ENCODE measurements at regions of chr22 and their contacts with region 1.

Region 1: GRCh38 chr22:50341977-50342650 is 1.0 kb upstream of the PPP6R2 start:
- DNase-seq: peak; percentile 83
- H3K4me3 Mint-ChIP-seq: peak overlapping the region; percentile 75
- H3K27ac Mint-ChIP-seq: peak overlapping the region; percentile 73
- H3K4me1 Mint-ChIP-seq: peaks cover 2% of the 10 kb centered on the region
- H3K27me3 Mint-ChIP-seq: no peaks in the 10 kb centered on the region

Region 2: GRCh38 chr22:50244420-50245213 is 97.5 kb before region 1 on chr22 and contains the start of gene TUBGCP6:
- intact Hi-C with region 1: loop called (anchors 1 kb)
- DNase-seq: peak; percentile 92
- H3K4me3 Mint-ChIP-seq: peak within 1 kb of the TSS; percentile 100
- H3K27ac Mint-ChIP-seq: peak within 1 kb of the TSS; percentile 100
- H3K4me1 Mint-ChIP-seq: peaks cover 12% of the 10 kb centered on the region
- H3K27me3 Mint-ChIP-seq: no peaks in the 10 kb centered on the region
- total RNA-seq, gene TUBGCP6: 48.8 and 49.6 TPM in 2 replicates

Region 3: DNA sequence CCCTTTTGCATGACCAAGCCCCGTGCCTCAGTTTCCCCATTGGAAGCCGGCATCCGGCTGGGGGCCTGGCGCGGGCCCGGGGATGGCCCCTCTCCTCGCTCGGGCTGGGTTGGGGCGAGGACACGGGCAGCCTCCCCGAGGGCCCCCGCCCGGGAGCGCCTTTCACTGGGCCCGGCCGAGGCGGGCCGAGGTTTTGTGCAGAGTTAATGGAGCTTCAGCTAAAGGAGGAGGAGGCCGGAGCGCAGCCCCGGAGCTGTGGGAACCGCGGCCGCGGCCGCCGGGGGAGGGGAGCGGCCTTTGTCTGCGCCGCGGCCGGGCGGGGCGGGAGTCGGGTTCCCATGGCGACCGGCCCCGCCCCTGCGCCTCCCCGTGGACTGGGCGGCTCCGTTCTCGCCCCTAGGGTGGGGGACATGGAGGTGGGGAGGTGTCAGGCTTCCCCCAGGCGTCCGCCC is 70.6 kb before region 1 on chr22:
- intact Hi-C with region 1: loop called (anchors 1 kb)
- DNase-seq: peak; percentile 49
- H3K4me3 Mint-ChIP-seq: no peak overlapping the region
- H3K27ac Mint-ChIP-seq: no peak overlapping the region
- H3K4me1 Mint-ChIP-seq: peaks cover 1% of the 10 kb centered on the region
- H3K27me3 Mint-ChIP-seq: peaks cover 15% of the 10 kb centered on the region

Region 4: DNA sequence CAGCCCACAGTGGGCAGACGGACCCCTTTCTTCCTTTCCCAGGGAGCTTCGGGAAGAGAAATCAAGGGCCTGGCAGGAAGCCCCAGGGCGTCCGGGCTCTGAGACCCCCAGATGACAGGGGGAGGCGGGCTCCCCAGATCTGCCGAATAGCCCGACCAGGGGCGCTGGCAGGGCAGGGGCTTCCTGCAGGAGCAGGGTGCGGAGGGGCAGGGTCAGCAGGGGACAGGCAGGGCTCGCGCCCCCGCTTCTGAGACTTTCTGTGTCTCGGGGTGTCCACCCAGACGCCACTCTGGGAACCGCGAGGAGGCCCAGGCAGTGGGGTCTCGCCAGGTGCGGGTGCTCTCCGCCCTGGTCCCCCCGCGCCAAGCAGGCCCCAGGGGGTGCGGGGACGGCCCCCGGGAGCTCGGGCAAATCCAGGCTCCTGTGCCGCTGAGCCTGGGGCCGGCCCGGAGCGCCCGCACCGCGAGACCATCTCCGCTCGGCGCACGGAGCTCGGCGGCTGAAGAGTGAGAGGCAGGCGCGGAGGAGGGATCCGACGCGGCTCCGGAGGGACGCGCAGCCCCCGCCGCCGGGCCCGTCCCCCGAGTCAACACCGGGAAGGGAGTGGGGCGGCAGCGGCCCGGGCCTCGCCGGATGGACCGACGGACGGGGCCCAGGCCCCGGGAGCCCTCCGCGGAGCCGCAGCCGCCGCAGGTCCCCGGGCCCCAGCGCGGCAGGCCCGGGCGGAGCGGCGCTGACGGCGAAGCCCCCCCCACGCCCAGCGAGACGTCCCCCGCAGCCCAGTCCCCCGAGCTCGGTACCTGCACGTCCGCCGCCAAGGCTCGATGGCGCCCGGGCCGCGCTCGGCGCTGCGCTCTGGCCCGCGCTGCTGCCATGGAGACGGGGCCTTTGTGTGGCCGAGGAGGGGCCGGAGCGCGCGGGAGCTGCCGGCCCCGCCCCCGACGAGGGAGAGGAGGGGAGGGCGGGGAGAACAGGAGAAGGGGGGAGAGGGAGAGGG is 35.1 kb before region 1 on chr22 and contains the start of gene PLXNB2:
- intact Hi-C with region 1: loop called (anchors 5 kb)
- DNase-seq: no peak
- H3K4me3 Mint-ChIP-seq: no peak within 1 kb of the TSS
- H3K27ac Mint-ChIP-seq: no peak within 1 kb of the TSS
- H3K4me1 Mint-ChIP-seq: peaks cover 6% of the 10 kb centered on the region
- H3K27me3 Mint-ChIP-seq: peaks cover 11% of the 10 kb centered on the region
- total RNA-seq, gene PLXNB2: 9.8 and 11.1 TPM in 2 replicates

Region 5: DNA sequence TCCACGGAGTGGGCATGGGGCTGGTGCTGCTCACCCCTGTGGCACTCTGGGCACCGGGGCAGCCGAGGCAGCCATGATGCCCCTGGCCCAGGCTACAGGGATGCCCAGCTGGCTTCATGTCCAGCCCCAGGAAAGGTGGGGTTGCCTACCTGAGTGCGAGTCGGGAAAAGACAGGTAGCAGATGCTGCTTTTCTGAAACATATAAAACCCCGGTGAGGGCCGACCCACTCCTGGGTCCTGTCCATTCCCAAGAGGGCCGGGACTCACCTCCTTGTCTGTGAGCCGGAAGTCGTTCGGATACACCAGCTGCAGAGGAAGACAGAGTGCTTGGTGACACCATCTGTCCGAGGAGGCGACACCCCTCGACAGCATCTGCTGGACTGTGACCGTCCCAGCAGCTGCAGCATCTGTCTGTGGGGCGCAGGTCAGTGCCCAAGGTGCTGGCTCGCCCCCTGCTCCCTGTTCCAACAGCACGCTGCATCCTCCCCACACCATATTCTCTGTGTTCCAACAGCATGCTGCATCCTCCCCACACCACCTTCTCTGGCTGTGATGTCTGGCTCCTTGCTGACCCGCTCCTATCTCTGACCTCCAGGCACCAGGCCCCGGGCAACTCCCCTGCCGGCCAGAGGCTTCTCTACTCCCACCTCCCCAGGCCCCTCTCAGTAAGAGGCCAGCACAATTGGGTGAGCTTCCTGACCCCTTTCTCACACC is 23.3 kb before region 1 on chr22:
- intact Hi-C with region 1: no loop called
- DNase-seq: no peak
- H3K4me3 Mint-ChIP-seq: no peak overlapping the region
- H3K27ac Mint-ChIP-seq: no peak overlapping the region
- H3K4me1 Mint-ChIP-seq: peaks cover 7% of the 10 kb centered on the region
- H3K27me3 Mint-ChIP-seq: no peaks in the 10 kb centered on the region

Region 6: GRCh38 chr22:50447576-50448551 is 105.8 kb after region 1 on chr22:
- intact Hi-C with region 1: no loop called
- DNase-seq: no peak
- H3K4me3 Mint-ChIP-seq: no peak overlapping the region
- H3K27ac Mint-ChIP-seq: no peak overlapping the region
- H3K4me1 Mint-ChIP-seq: peaks cover 2% of the 10 kb centered on the region
- H3K27me3 Mint-ChIP-seq: no peaks in the 10 kb centered on the region

Region 7: DNA sequence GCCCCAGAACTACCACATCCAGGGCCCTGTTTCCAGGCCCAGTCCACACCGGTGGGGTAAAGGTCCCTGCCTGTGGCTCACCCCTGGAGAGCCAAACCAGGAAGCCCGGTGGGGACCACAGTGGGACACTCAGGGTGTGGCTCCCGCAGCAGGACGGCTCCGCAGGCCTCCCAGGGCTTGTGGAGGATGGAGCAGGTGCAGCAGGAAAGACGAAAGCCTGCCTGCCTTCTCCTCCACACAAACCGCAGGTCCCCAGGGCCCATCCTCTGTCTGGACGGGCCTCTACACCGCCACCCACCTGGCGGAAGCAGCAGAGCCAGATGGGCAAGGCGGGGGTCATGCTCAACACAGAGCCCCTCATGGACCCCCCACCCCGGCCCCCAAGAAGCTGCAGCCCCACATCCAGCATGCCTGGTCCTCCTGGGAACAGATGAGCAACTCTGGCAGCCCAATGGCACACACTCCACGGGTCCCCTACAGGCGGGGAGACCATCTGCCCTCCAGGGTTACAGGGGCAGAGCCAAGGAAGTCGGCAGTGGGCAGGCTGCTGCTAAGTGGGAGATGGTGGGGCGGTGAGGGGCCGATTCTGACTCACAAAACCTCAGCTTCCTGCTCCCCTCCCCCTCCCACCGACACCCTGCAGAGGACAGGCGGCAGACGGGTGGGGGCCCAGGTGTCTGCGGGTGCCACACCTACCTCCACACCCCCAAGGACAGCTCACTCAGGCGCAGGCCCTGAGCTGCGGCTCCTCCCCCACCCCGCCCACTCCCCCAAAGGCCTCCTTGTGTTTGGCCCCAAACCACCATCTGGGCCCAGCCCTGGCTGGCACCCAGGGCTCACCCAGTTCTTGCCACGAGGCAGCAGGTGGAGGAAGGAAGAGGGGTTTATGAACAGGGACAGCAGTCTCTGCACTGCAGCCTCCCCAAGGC is 127.5 kb after region 1 on chr22:
- intact Hi-C with region 1: loop called (anchors 10 kb)
- DNase-seq: peak; percentile 95
- H3K4me3 Mint-ChIP-seq: peak overlapping the region; percentile 55
- H3K27ac Mint-ChIP-seq: peak overlapping the region; percentile 83
- H3K4me1 Mint-ChIP-seq: peaks cover 45% of the 10 kb centered on the region
- H3K27me3 Mint-ChIP-seq: no peaks in the 10 kb centered on the region

Region 8: DNA sequence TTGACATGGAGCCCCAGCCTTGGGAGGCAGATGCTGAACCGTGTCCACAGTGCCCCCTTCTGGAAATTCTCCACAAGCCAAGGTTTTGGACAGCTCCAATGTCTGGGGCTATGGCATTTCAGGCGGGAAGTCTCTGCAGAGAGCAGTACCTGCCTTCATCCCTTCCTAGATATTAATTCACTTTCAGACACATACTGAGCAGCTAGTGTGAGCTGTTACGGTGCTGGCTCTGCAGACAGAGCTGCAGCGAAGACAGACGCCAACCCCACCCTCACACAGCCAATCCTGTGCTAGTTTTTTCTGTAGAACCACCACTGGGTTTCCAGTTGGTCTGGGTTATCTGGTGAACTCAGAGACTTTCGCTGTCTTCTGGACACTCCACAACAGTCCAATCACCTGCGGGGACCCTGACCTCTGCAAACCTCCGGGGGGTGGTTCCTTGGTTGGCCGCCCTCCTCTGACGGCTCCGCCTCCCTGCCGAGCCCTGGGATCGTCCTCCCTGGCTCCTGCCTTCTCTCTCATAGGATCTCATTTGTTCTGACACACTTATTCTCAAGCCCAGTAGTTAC is 156.3 kb after region 1 on chr22:
- intact Hi-C with region 1: no loop called
- DNase-seq: peak; percentile 61
- H3K4me3 Mint-ChIP-seq: no peak overlapping the region
- H3K27ac Mint-ChIP-seq: no peak overlapping the region
- H3K4me1 Mint-ChIP-seq: peaks cover 1% of the 10 kb centered on the region
- H3K27me3 Mint-ChIP-seq: no peaks in the 10 kb centered on the region

Measured in activated T-helper 2 cell treated with anti-CD3 and anti-CD28 coated beads, Interferon-gamma antibody, Interleukin-2, Interleukin-4, amounts not matched to agents 10 μg/mL and 5 μg/mL and 100 μg/mL, durations not matched to agents 14 hours and 24 hours and 36 hours (primary cell).